ENCODE measurements at regions of chr17 and their contacts with region 1.

Region 1: DNA sequence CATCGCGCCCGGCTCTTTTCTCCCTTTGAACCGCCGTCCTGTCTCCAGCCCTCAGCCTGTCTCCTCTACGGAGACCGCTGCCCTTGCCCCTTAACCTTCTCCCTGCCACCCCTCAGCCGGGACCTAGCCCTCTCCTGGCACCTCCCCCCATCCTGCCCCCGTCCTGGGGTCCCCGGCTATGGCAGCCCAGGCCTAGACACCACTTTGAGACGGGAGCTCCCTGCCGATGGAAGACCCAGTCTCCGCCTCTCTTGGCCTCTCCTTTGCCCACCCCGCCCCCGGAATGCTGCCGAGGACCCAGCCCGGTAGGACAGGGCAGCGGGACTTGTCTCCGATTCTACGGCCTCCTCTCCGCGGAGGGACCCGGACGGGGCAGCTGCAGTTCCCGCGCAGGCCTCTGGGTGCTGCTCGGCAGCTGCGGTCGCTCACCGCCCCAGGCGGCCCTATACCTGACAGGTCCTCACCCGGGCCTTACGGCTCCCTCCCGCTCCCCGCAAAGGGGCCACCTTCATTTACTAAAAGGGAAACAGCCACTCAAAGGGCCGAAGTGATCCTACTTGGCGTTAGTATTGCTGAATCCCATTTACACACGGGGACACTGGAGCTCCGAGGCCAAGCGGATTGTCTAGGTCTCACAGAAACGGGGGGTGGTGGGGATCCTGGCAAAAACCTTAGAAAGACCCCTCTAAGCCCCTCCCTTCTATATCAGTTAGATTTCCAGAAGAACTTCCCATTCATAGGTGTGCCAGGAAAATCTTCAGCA is 32.6 kb upstream of the TAC4 start:
- DNase-seq: peak; percentile 85 to 95
- H3K4me3 ChIP-seq: peak overlapping the region; percentile 17 to 61 (median 44); a peak in 6 of 8 replicates
- H3K27ac ChIP-seq: no peak overlapping the region
- H3K4me1 ChIP-seq: peaks cover 3 to 15% (median 9%) of the 10 kb centered on the region in 4 experiments
- H3K27me3 ChIP-seq: peaks cover 0 to 4% (median 1%) of the 10 kb centered on the region in 4 experiments; a peak in 5 of 7 replicates
- CTCF ChIP-seq: peak; percentile 89 to 96 (median 91)
- EP300 ChIP-seq: 0 out of 3 replicates have a peak, but pooled peaks of 1 of the 2 experiments have one; percentile 36
- POLR2A ChIP-seq: no peak
- RAD21 ChIP-seq: peak; percentile 92 to 93

Region 2: GRCh38 chr17:49899191-49899485 is 18.7 kb after region 1 on chr17:
- CTCF ChIA-PET with region 1: interaction called, 15 read pairs
- POLR2A ChIA-PET with region 1: interaction called, 3 read pairs
- DNase-seq: peak in 1 of 2 experiments; percentile 70
- H3K4me3 ChIP-seq: no peak overlapping the region
- H3K27ac ChIP-seq: no peak overlapping the region
- H3K4me1 ChIP-seq: peaks cover 4 to 19% (median 14%) of the 10 kb centered on the region in 4 experiments
- H3K27me3 ChIP-seq: peaks cover 5 to 33% (median 32%) of the 10 kb centered on the region in 4 experiments
- CTCF ChIP-seq: peak; percentile 39 to 80 (median 64)
- EP300 ChIP-seq: no peak
- POLR2A ChIP-seq: no peak
- RAD21 ChIP-seq: peak; percentile 63 to 79

Region 3: DNA sequence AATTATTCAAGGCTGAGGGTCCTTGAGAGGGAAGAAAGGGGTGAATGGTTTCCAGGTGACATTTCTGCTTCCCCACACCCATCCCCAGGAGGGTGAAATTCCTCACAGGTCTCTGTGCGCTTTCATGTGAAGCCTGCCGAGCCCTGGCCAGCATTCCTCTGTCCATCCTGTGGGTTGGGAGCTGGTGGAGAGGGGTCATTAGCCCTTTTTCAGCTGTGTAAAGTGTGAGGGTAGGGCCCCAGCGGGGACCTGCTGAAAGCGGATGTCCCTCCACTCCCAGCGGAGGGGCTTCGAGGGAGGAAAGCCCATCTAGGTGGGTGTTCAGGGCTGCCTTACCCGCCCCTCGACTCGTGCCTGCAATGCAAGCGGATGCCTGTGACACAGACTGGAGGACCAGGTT is 35.2 kb after region 1 on chr17:
- CTCF ChIA-PET with region 1: interaction called, 11 read pairs
- POLR2A ChIA-PET with region 1: interaction called, 3 read pairs
- DNase-seq: peak in 1 of 2 experiments; percentile 56
- H3K4me3 ChIP-seq: 0 out of 8 replicates have a peak overlapping the region, but pooled peaks of 1 of the 4 experiments have one; percentile 10
- H3K27ac ChIP-seq: no peak overlapping the region
- H3K4me1 ChIP-seq: peaks cover 3 to 12% (median 6%) of the 10 kb centered on the region in 4 experiments; a peak in 6 of 7 replicates
- H3K27me3 ChIP-seq: peaks cover 0 to 37% (median 32%) of the 10 kb centered on the region in 4 experiments; a peak in 6 of 7 replicates
- CTCF ChIP-seq: no peak
- EP300 ChIP-seq: no peak
- POLR2A ChIP-seq: no peak
- RAD21 ChIP-seq: no peak

Region 4: GRCh38 chr17:49959183-49959935 is 78.9 kb after region 1 on chr17:
- CTCF ChIA-PET with region 1: interaction called, 13 read pairs
- POLR2A ChIA-PET with region 1: no interaction called
- DNase-seq: no peak
- H3K4me3 ChIP-seq: no peak overlapping the region
- H3K27ac ChIP-seq: no peak overlapping the region
- H3K4me1 ChIP-seq: peaks cover 0 to 20% (median 14%) of the 10 kb centered on the region in 4 experiments; a peak in 6 of 7 replicates
- H3K27me3 ChIP-seq: peaks cover 21 to 36% (median 31%) of the 10 kb centered on the region in 4 experiments
- CTCF ChIP-seq: no peak
- EP300 ChIP-seq: no peak
- POLR2A ChIP-seq: no peak
- RAD21 ChIP-seq: no peak

Region 5: DNA sequence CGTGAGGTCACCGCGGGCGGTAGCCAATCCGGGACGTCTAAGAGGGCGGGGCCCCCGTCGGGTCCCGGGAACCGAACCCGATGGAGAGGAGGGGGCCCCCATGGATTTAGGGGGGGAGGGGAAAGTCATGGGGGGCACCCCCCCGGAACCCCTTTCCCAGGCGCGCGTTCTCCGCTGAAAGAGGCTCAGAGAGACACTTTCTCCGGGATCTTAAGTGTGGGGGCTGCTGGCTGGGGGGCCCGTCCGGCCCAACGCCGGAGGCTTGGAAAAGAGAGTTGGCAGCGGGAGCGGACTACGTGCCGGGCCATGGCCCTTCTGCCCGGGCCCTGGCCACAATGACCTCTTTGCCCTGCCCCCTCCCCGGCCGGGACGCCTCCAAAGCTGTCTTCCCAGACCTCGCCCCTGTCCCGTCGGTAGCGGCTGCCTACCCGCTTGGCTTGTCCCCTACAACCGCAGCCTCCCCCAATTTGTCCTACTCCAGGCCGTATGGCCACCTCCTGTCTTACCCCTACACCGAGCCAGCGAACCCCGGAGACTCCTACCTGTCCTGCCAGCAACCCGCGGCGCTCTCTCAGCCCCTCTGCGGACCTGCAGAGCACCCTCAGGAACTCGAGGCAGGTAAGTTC is 88.8 kb after region 1 on chr17 and contains the start of gene DLX4:
- CTCF ChIA-PET with region 1: interaction called, 13 read pairs
- POLR2A ChIA-PET with region 1: interaction called, 3 read pairs
- DNase-seq: peak in 1 of 2 experiments; percentile 81
- H3K4me3 ChIP-seq: peak within 1 kb of the TSS; percentile 53 to 78 (median 62)
- H3K27ac ChIP-seq: no peak within 1 kb of the TSS
- H3K4me1 ChIP-seq: peaks cover 0 to 38% (median 25%) of the 10 kb centered on the region in 4 experiments; a peak in 6 of 7 replicates
- H3K27me3 ChIP-seq: peaks cover 91 to 100% (median 96%) of the 10 kb centered on the region in 4 experiments
- CTCF ChIP-seq: no peak
- EP300 ChIP-seq: no peak
- POLR2A ChIP-seq: no peak
- RAD21 ChIP-seq: no peak
- total RNA-seq, gene DLX4: 0.80 and 0.88 TPM in 2 replicates